ENCODE measurements at regions of chr5 and their contacts with region 1.

Region 1: GRCh38 chr5:79464695-79465332 is 49.1 kb downstream of the HOMER1 start:
- DNase-seq: no peak
- ATAC-seq: peak in 4 of 8 donors; percentile 36 to 55 (median 49)
- H3K4me3 ChIP-seq: no peak overlapping the region
- H3K27ac ChIP-seq: no peak overlapping the region
- H3K4me1 ChIP-seq: peaks cover 0 to 25% (median 4%) of the 10 kb centered on the region in 9 donors
- H3K27me3 ChIP-seq: no peaks in the 10 kb centered on the region
- CTCF ChIP-seq: peak; percentile 12 to 71 (median 57)

Region 2: GRCh38 chr5:79133657-79134451 is 331.0 kb before region 1 on chr5:
- intact Hi-C with region 1: loop called in 7 of 10 experiments (anchors 2 to 10 kb)
- DNase-seq: peak; percentile 34 to 60
- ATAC-seq: peak; percentile 34 to 82 (median 70)
- H3K4me3 ChIP-seq: peak overlapping the region in 8 of 10 donors; percentile 19 to 49 (median 34)
- H3K27ac ChIP-seq: peak overlapping the region in 5 of 10 donors; percentile 5 to 60 (median 31)
- H3K4me1 ChIP-seq: peaks cover 0 to 13% (median 9%) of the 10 kb centered on the region in 9 donors
- H3K27me3 ChIP-seq: no peaks in the 10 kb centered on the region
- CTCF ChIP-seq: peak; percentile 59 to 77 (median 68)

Measured in heart right ventricle (tissue), 16 donors.